ENCODE measurements at regions of chr17 and their contacts with region 1.

Region 1: GRCh38 chr17:7280519-7281429 is 744 bp upstream of the SLC2A4 start:
- DNase-seq: peak; percentile 76 to 92 (median 86)
- ATAC-seq: peak; percentile 88
- H3K4me3 ChIP-seq: peak overlapping the region; percentile 41 to 46
- H3K4me3 Mint-ChIP-seq: peak overlapping the region; percentile 73
- H3K27ac ChIP-seq: no peak overlapping the region
- H3K27ac Mint-ChIP-seq: no peak overlapping the region
- H3K4me1 ChIP-seq: peaks cover 25% of the 10 kb centered on the region
- H3K4me1 Mint-ChIP-seq: peaks cover 16% of the 10 kb centered on the region
- H3K27me3 ChIP-seq: peaks cover 0 to 26% of the 10 kb centered on the region in 2 experiments
- H3K27me3 Mint-ChIP-seq: peaks cover 9% of the 10 kb centered on the region
- CTCF ChIP-seq: peak; percentile 84

Region 2: DNA sequence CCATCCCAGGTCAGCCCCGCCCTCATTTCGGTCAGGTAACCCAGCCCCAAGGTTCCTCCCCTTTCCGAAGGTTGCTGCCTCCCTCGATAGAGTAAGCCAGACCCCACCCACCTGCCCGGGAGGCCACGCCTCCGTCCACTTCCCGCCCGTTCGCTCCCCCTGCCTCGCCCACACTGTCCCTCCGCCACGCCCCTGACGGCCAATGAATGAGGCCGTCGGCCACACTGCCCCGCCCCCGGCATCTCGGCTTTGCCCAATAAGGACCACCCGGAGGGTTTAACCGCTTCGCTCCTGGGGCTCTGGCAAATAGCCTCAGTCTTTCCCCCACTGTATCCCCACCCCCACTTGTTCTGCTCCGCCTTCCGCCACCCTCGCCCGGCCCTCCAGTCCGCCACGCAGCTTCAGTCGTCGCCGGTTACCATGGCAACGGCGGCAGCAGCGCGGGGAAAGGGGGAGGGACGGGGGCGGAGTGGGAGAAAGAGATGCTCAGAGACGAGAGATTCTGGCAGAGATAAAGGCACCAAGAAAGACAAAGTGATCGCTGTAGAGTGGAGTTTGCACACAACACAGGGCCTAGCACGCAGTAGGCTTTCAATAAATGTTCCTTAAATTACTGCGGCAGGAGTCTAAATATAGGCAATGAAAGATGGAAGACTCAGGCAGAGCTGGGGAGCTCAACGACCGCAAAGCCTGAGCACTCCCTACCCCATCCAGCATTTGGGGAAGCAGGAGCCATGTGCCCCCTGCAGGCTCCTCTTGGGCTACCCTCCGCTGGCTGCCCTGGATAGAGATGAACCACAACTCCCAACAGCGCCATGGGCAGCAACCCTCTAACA is 66.3 kb before region 1 on chr17:
- CTCF ChIA-PET with region 1: interaction called, 4 read pairs
- POLR2A ChIA-PET with region 1: interaction called, 3 read pairs
- intact Hi-C with region 1: loop called in 1 of 2 experiments (anchors 1 kb)
- DNase-seq: peak; percentile 97 to 100 (median 98)
- ATAC-seq: peak; percentile 75
- H3K4me3 ChIP-seq: peak overlapping the region; percentile 36 to 56
- H3K4me3 Mint-ChIP-seq: peak overlapping the region; percentile 90
- H3K27ac ChIP-seq: peak overlapping the region; percentile 80 to 95
- H3K27ac Mint-ChIP-seq: peak overlapping the region; percentile 95
- H3K4me1 ChIP-seq: peaks cover 51% of the 10 kb centered on the region
- H3K4me1 Mint-ChIP-seq: peaks cover 61% of the 10 kb centered on the region
- H3K27me3 ChIP-seq: no peaks in the 10 kb centered on the region
- H3K27me3 Mint-ChIP-seq: no peaks in the 10 kb centered on the region
- CTCF ChIP-seq: peak; percentile 52

Region 3: DNA sequence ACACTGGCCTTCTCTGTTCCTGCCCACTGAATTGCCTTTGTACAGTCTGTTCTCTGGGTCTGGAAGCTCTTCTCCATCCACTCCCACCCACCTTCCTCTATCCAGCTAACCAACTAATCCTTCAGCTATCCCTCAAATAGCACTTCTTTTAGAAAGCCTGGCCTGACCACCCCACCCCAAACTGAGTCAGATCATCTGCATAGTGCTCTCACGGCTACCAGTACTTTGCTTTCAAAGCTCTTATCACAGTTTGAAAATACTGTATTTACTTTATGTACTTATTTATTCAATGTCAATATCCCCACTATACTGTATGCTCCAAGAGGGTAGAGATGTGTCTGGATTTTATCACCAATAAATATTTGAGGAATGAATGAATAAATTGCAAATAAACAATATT is 14.0 kb before region 1 on chr17:
- CTCF ChIA-PET with region 1: interaction called, 10 read pairs
- POLR2A ChIA-PET with region 1: no interaction called
- intact Hi-C with region 1: loop called in 1 of 2 experiments (anchors 2 kb)
- DNase-seq: no peak
- ATAC-seq: no peak
- H3K4me3 ChIP-seq: no peak overlapping the region
- H3K4me3 Mint-ChIP-seq: no peak overlapping the region
- H3K27ac ChIP-seq: no peak overlapping the region
- H3K27ac Mint-ChIP-seq: no peak overlapping the region
- H3K4me1 ChIP-seq: peaks cover 20% of the 10 kb centered on the region
- H3K4me1 Mint-ChIP-seq: peaks cover 20% of the 10 kb centered on the region
- H3K27me3 ChIP-seq: peaks cover 0 to 15% of the 10 kb centered on the region in 2 experiments
- H3K27me3 Mint-ChIP-seq: no peaks in the 10 kb centered on the region
- CTCF ChIP-seq: no peak

Region 4: DNA sequence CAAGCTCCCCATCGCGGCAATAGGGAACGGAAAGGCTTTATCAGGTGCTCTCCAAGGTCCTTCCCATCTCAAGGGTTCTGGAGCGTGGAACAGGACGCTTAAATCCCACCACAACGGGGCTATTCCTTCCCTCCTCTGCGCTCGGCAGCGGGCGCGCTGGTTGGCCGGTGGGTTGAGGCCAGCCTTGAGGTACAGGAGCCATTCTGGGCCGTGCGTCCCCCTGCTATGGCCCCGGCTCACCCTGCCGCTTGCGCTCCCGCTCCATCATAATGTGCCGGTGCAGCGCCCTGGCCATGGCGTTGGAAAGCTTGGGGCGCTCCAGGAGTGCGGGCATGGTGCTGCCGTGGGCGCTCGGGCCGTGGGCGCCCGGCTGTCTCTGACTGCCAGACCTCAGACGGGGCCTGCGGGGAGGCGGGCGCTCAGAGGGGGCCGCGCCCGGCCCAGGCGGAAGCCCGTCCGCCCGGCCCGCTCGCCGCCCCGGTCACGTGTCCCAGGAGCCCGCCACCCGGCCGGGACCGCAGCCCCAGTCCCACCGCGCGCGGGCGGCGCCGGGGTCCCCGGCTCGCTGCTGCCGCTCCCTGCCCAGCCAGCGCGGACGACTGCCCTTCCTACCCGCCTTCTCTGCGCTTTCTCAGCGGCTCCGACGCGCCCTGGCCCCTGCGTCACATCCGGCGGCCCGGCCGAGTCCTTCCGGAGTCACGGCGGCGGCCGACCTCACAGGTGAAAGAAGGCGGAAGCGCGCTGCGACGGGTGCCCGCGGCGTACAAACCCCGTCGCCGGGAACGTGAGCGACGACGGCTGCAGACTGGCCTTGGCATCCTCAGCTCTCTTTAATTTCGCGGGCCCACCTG is 34.2 kb after region 1 on chr17 and contains the start of gene GPS2:
- CTCF ChIA-PET with region 1: interaction called, 3 read pairs
- POLR2A ChIA-PET with region 1: no interaction called
- intact Hi-C with region 1: loop called in 1 of 2 experiments (anchors 2 kb)
- DNase-seq: peak; percentile 87 to 97 (median 94)
- ATAC-seq: peak; percentile 78
- H3K4me3 ChIP-seq: peak within 1 kb of the TSS; percentile 77 to 82
- H3K4me3 Mint-ChIP-seq: peak within 1 kb of the TSS; percentile 92
- H3K27ac ChIP-seq: peak within 1 kb of the TSS; percentile 81 to 97
- H3K27ac Mint-ChIP-seq: peak within 1 kb of the TSS; percentile 96
- H3K4me1 ChIP-seq: peaks cover 50% of the 10 kb centered on the region
- H3K4me1 Mint-ChIP-seq: peaks cover 51% of the 10 kb centered on the region
- H3K27me3 ChIP-seq: no peaks in the 10 kb centered on the region
- H3K27me3 Mint-ChIP-seq: no peaks in the 10 kb centered on the region
- CTCF ChIP-seq: no peak
- total RNA-seq, gene GPS2: 128 to 132 TPM

Region 5: GRCh38 chr17:7589204-7589868 is 308.6 kb after region 1 on chr17:
- CTCF ChIA-PET with region 1: no interaction called
- POLR2A ChIA-PET with region 1: no interaction called
- intact Hi-C with region 1: loop called (anchors 1 kb)
- DNase-seq: peak; percentile 40 to 81 (median 68)
- ATAC-seq: peak; percentile 89
- H3K4me3 ChIP-seq: no peak overlapping the region
- H3K4me3 Mint-ChIP-seq: no peak overlapping the region
- H3K27ac ChIP-seq: no peak overlapping the region
- H3K27ac Mint-ChIP-seq: peak overlapping the region; percentile 41
- H3K4me1 ChIP-seq: peaks cover 14% of the 10 kb centered on the region
- H3K4me1 Mint-ChIP-seq: peaks cover 12% of the 10 kb centered on the region
- H3K27me3 ChIP-seq: no peaks in the 10 kb centered on the region
- H3K27me3 Mint-ChIP-seq: no peaks in the 10 kb centered on the region
- CTCF ChIP-seq: peak; percentile 61

Measured in CD8-positive, alpha-beta T cell (primary cell).